H1 (cell line): ENCODE measurements at regions of chr15 and their contacts with region 1.

Region 1: GRCh38 chr15:73273181-73274002 is 95.4 kb downstream of the HCN4 start:
- DNase-seq: peak; percentile 15 to 67
- H3K4me3 ChIP-seq: no peak overlapping the region
- H3K27ac ChIP-seq: no peak overlapping the region
- H3K4me1 ChIP-seq: no peaks in the 10 kb centered on the region
- H3K27me3 ChIP-seq: no peaks in the 10 kb centered on the region
- CTCF ChIP-seq: peak; percentile 54 to 80 (median 76)
- EP300 ChIP-seq: no peak
- POLR2A ChIP-seq: no peak
- RAD21 ChIP-seq: peak; percentile 71 to 84

Region 2: GRCh38 chr15:73190189-73190601 is 83.2 kb before region 1 on chr15:
- CTCF ChIA-PET with region 1: no interaction called
- POLR2A ChIA-PET with region 1: no interaction called
- DNase-seq: no peak
- H3K4me3 ChIP-seq: no peak overlapping the region
- H3K27ac ChIP-seq: no peak overlapping the region
- H3K4me1 ChIP-seq: no peaks in the 10 kb centered on the region
- H3K27me3 ChIP-seq: no peaks in the 10 kb centered on the region
- CTCF ChIP-seq: no peak
- EP300 ChIP-seq: no peak
- POLR2A ChIP-seq: no peak
- RAD21 ChIP-seq: no peak

Region 3: DNA sequence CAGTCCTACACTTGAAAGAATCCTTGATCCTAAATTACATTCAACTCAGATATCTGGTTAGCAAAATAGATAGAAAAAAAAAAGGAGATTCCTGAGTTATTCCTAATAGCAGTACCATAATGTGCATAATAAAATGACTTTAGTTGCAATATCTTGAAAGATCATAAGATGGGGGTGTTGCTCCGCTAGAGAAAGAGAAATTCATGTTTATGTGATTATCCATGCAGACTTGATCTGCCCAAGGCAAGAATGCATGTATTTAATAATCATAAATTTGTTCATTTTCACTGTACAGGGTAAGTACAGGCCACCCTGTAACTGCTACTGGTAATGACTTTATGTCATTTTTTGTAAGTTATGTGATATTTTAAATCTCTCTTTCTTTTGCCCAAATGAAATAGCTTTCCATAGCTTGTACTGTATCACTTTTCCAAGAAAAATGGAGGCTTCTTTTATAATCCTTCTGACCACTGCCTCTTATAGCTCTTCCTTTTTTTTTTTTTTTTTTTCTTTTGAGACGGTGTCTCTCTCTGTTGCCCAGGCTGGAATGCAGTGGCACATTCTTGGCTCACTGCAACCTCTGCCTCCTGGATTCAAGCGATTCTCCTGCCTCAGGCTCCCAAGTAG is 10.8 kb after region 1 on chr15:
- CTCF ChIA-PET with region 1: interaction called, 24 read pairs
- POLR2A ChIA-PET with region 1: no interaction called
- DNase-seq: no peak
- H3K4me3 ChIP-seq: no peak overlapping the region
- H3K27ac ChIP-seq: no peak overlapping the region
- H3K4me1 ChIP-seq: no peaks in the 10 kb centered on the region
- H3K27me3 ChIP-seq: no peaks in the 10 kb centered on the region
- CTCF ChIP-seq: no peak
- EP300 ChIP-seq: no peak
- POLR2A ChIP-seq: no peak
- RAD21 ChIP-seq: peak in 1 of 2 experiments; percentile 10; a peak in 1 of 4 replicates

Region 4: GRCh38 chr15:74025436-74025835 is 752.0 kb after region 1 on chr15:
- CTCF ChIA-PET with region 1: no interaction called
- POLR2A ChIA-PET with region 1: no interaction called
- DNase-seq: no peak
- H3K4me3 ChIP-seq: no peak overlapping the region
- H3K27ac ChIP-seq: 0 out of 2 replicates have a peak overlapping the region, but pooled peaks have one; percentile 38
- H3K4me1 ChIP-seq: no peaks in the 10 kb centered on the region
- H3K27me3 ChIP-seq: no peaks in the 10 kb centered on the region
- CTCF ChIP-seq: no peak
- EP300 ChIP-seq: no peak
- POLR2A ChIP-seq: no peak
- RAD21 ChIP-seq: no peak